ENCODE measurements at regions of chr3 and their contacts with region 1.

Region 1: GRCh38 chr3:194682694-194683310 is 2.9 kb upstream of the FAM43A start:
- DNase-seq: peak; percentile 60
- ATAC-seq: peak; percentile 49

Region 2: DNA sequence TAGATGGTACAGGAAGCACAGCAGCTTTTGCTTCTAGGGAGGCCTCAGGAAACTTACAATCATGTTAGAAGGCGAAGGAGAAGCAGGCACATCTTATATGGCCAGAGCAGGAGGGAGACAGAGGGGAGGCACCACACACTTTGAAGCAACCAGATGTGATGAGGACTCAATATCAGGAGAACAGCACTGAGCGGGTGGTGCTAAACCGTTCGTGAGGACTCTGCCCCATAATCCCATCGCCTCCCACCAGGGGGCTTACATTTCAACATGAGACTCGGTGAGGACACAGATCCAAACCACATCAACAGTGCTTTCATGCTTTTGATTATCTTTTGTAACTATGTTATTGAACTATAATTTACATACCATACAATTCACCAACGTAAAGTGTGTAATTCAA is 42.0 kb before region 1 on chr3:
- intact Hi-C with region 1: no loop called
- DNase-seq: no peak
- ATAC-seq: no peak

Region 3: DNA sequence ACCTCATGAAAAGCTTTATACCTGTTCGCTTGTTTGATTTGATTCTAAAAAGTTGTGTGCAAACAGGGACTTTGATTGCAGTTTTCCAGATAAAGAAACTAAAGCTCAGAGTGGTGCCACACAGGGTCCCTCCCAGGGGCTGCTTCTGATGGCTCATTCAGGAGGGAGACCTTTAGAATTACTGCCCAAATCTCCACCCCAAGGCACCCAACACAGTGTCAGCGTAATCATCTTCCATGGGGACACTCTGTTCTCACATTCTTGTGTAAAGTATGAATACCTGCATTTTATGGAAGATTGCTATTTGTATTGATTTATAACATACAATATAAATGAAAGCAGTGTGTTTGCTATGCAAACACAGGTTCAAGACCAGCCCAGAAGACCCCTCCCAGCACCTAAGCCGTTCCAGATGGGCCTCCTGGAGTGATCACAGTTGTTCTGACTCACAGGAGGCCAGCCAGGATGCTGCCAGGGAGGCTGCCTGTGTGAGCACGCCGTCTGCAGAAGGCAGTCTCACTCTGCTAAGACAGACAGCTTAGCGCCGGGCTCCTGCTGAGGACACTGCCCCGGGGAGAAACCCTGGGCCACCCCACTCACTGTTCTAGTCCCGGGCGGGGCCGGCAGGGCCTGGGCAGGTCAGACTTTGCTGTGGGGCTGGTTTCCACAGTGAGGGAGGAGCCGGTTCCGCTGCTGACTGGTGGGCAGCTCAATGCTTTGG is 188.5 kb after region 1 on chr3:
- intact Hi-C with region 1: loop called (anchors 10 kb)
- DNase-seq: peak; percentile 76
- ATAC-seq: peak; percentile 63

Region 4: GRCh38 chr3:194985031-194985578 is 302.3 kb after region 1 on chr3:
- intact Hi-C with region 1: loop called (anchors 5 kb)
- DNase-seq: peak; percentile 89
- ATAC-seq: peak; percentile 93

Region 5: GRCh38 chr3:195106418-195106906 is 423.7 kb after region 1 on chr3:
- intact Hi-C with region 1: loop called (anchors 2 kb)
- DNase-seq: peak; percentile 84
- ATAC-seq: peak; percentile 83

Region 6: DNA sequence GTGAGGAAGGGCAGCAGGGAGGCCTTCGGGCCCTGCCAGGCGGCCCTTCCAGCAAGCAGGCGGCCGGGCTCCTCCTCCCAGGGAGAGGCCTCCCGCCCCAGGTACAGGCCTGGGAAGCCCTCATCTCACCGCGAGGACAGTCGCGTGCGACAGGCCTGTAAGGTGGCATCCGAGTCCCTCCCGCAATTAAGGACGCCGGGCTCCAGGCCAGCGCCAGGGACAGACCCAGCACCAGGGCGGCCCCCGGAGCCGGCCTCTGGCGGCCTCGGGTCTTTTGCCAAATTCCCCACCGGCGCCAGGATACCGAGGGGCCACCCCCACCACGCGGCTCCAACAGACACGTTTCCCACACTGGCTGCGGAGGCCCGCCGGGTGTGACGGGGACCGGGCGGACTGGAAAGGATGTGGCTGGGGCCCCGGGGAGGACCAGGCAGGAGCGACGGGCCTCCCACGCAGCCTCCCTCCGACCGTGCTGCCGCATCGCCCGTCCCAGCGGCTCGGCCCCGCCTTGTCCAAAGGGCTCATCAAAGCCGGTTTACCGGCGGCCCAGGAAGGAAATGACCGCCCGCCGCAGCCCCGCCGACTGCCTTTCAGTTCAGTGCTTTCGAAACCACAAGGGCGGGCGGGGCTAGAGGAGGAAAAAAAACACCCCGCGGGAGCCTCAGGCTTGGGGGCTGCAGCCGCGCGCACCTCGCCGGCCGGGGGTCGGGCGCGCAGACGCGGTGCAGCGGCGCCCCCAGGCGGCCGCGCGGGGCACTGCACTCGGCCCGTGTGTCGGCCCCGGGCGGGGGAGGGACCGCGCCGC is 576.9 kb after region 1 on chr3:
- intact Hi-C with region 1: loop called (anchors 2 kb)
- DNase-seq: peak; percentile 93
- ATAC-seq: peak; percentile 91

Measured in Right ventricle myocardium superior (tissue), 1 donor.